H1 (cell line): ENCODE measurements at regions of chr5 and their contacts with region 1.

Region 1: DNA sequence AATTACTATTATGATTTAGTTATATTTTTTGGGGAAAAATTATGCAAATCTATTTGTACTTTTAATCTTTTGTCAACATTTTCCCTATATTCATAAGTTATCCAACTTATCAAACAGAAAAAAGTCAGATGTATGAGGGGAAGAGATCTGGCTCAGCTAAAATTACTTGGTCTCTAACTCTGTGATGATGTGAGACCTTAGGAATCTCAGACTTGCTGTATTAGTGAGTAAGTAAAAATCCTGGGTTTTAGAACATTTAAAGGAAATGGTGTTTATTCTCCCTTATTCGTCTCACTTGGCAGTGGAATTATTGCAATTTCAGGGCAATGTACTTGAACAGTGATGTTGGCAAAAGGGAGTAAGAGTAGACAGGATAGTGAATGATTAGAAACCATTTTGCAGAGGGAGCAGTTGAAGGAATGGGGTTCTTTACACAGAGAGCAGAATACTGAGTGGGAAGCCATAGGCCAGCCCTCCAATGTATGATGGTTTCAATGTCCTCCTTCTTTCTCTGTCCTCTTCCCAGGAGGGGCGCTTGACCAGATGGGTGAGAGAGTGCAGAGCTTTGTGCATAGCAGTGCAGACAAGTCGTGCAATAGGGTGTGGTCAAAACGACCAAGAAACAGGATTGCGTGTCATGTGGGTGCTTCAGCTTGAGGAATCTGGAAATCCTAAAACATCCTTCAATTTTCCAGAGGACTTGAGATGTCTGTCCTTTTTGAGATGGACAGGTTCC is 91.7 kb downstream of the TENT4A start:
- DNase-seq: no peak
- H3K4me3 ChIP-seq: no peak overlapping the region
- H3K27ac ChIP-seq: no peak overlapping the region
- H3K4me1 ChIP-seq: no peaks in the 10 kb centered on the region
- H3K27me3 ChIP-seq: no peaks in the 10 kb centered on the region
- CTCF ChIP-seq: no peak
- EP300 ChIP-seq: no peak
- POLR2A ChIP-seq: no peak
- RAD21 ChIP-seq: no peak

Region 2: GRCh38 chr5:6788956-6789649 is 15.8 kb before region 1 on chr5:
- CTCF ChIA-PET with region 1: interaction called, 27 read pairs
- POLR2A ChIA-PET with region 1: no interaction called
- DNase-seq: peak in 1 of 2 experiments; percentile 68
- H3K4me3 ChIP-seq: no peak overlapping the region
- H3K27ac ChIP-seq: no peak overlapping the region
- H3K4me1 ChIP-seq: no peaks in the 10 kb centered on the region
- H3K27me3 ChIP-seq: no peaks in the 10 kb centered on the region
- CTCF ChIP-seq: peak; percentile 55 to 71 (median 69)
- EP300 ChIP-seq: no peak
- POLR2A ChIP-seq: no peak
- RAD21 ChIP-seq: peak; percentile 30 to 51; a peak in 3 of 4 replicates